ENCODE measurements at regions of chr11 and their contacts with region 1.

Region 1: GRCh38 chr11:120324932-120325810 is at the start of gene TLCD5:
- DNase-seq: peak in 1 of 2 donors; percentile 45
- ATAC-seq: peak; percentile 64
- total RNA-seq, gene TLCD5: 0.49 to 1.1 TPM

Region 2: GRCh38 chr11:120375076-120375475 is 49.9 kb after region 1 on chr11:
- intact Hi-C with region 1: no loop called
- DNase-seq: no peak
- ATAC-seq: no peak

Region 3: GRCh38 chr11:120482149-120482548 is 157.0 kb after region 1 on chr11:
- intact Hi-C with region 1: loop called in 1 of 2 experiments (anchors 10 kb)
- DNase-seq: no peak
- ATAC-seq: no peak